Left ventricle myocardium superior (tissue), 1 donor: ENCODE measurements at regions of chr13 and their contacts with region 1.

Region 1: GRCh38 chr13:52128714-52129700 is at the start of gene NEK5:
- DNase-seq: peak; percentile 81
- ATAC-seq: peak; percentile 94
- total RNA-seq, gene NEK5: 0.25 TPM

Region 2: GRCh38 chr13:51583875-51584730 is 544.9 kb before region 1 on chr13 and contains the start of gene WDFY2:
- intact Hi-C with region 1: no loop called
- DNase-seq: peak; percentile 100
- ATAC-seq: peak; percentile 95
- total RNA-seq, gene WDFY2: 4.9 TPM

Region 3: DNA sequence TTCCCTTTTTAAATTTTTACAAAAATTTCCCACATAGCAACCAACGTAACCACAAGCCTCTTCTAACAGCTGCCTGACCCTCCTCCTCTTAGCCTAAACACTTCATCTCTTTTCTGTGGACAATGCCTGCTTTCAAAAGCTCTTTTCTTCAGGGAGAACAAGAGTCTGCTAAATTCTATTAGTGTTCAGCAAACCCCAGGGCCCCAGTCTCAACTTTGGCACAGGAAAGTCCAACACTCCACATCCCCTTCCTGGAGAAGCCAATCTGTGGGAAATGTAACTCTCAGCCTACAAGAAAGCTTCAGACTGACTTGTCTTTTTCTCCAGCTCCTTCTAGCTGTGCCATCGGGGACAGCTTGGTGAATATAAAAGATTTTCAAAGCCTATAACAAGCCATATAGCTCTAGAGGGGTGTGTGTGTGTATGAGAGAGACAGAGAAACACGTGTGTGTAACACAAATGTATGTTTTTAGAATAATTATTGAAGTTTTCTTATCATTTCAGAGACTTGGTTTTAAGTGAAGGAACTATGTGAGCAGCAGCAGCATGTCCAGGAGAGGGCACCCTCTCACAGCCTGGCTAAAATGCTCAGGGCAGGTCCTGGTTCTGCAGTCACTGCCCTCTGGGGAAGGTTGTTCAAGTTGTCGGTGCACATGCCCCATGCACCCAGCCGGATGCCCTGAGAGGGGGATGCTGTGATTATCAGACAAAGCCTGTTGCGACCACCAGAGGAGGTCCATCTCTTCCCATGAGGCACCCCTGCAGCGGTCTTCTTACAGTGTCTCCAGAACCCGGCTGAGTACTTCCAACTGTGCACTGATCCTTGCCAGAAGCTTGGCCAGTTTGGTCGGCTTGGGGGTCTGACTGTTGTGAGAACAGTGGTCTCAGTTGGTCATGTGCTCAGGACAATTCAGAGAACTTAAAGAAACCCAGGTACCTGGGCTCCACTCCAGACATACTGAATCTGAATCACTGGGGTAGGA is 232.8 kb before region 1 on chr13:
- intact Hi-C with region 1: loop called (anchors 5 kb)
- DNase-seq: peak; percentile 68
- ATAC-seq: peak; percentile 93

Region 4: DNA sequence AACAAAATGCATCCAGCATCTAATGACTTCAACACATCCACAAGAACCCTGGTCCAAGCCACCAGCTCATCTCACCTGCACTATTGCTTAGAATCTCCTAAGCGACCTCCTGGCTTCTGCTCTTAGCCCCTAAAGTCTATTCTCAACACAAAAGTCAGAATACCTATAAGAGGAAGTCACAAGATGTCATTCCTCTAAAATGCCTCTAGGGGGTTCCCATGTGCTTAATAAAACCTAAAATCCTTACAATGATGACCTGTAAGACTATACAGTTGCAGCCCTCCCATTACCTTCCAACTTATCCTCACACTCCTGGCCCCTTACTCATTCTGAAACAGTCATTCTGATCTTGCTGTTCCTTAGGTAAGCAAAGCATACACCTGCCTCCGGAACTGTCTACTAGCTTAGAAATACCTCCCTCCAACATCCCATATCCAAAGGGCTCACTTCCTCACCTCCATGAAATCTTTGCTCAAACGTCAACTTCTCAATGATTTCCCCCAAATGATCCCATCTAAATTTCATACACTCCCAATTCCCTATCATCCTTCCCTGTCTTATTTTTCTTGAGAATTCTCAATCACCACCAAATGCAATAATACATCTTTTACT is 127.8 kb before region 1 on chr13:
- intact Hi-C with region 1: loop called (anchors 2 kb)
- DNase-seq: no peak
- ATAC-seq: peak; percentile 50

Region 5: DNA sequence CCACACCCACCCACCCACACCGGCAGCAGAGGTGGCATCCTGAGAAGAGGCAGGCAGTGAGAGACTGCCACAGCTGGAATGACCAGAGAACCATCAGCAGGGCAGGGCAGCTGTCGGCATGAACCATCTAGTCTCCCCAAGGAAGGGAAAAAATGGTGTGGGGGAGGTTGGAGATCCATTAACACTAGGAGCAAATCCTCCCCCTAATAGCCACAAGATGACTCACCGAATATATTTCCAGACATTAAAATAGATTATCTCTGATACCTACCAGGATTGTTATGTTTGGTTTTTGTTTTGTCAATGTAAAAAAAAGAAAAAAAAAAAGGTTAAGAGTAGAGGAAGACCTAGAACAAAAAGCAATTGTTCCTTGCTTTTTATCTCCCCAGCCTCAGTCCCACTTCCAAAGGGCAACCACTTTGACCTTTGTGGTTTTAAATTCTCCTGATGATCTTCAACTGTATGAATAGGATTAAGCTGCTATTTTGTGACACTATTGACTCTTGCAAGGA is 242.8 kb after region 1 on chr13:
- intact Hi-C with region 1: no loop called
- DNase-seq: no peak
- ATAC-seq: peak; percentile 39